ENCODE measurements at regions of chr12 and their contacts with region 1.

Region 1: DNA sequence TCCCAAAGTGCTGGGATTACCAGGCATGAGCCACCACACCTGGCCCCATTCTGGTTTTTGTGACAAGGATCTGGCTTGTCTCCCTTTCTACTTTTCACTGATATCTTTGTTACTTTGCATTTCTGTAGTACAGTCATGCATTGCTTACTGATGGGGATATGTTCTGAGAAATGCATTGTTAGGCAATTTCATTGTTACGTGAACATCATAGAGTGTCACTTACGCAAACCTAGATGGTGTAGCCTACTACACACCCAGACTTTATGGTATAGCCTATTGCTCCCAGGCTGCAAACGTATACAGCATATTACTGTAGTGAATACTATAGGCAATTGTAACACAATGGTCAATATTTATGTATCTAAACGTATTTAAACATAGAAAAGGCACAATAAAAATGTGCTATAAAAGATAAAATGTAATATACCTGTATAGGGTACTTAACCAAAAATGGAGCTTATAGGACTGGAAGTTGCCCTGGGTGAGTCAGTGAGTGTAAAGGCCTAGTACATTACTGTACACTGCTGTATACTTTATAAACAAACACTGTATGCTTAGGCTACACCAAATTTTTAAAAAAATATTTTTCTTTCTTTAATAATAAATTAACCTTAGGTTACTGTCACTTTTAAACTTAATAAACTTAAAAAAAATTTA is 16.0 kb downstream of the MRPL42 start:
- DNase-seq: no peak
- ATAC-seq: no peak
- H3K4me3 ChIP-seq: no peak overlapping the region
- H3K27ac ChIP-seq: no peak overlapping the region
- H3K4me1 ChIP-seq: no peaks in the 10 kb centered on the region
- H3K27me3 ChIP-seq: no peaks in the 10 kb centered on the region
- CTCF ChIP-seq: no peak

Region 2: GRCh38 chr12:92854344-92854743 is 628.9 kb before region 1 on chr12:
- CTCF ChIA-PET with region 1: no interaction called
- POLR2A ChIA-PET with region 1: interaction called, 13 read pairs
- intact Hi-C with region 1: no loop called
- DNase-seq: no peak
- ATAC-seq: no peak
- H3K4me3 ChIP-seq: no peak overlapping the region
- H3K27ac ChIP-seq: no peak overlapping the region
- H3K4me1 ChIP-seq: no peaks in the 10 kb centered on the region
- H3K27me3 ChIP-seq: no peaks in the 10 kb centered on the region
- CTCF ChIP-seq: no peak

Region 3: GRCh38 chr12:93603762-93604161 is 120.5 kb after region 1 on chr12:
- CTCF ChIA-PET with region 1: no interaction called
- POLR2A ChIA-PET with region 1: no interaction called
- intact Hi-C with region 1: no loop called
- DNase-seq: no peak
- ATAC-seq: no peak
- H3K4me3 ChIP-seq: no peak overlapping the region
- H3K27ac ChIP-seq: no peak overlapping the region
- H3K4me1 ChIP-seq: no peaks in the 10 kb centered on the region
- H3K27me3 ChIP-seq: no peaks in the 10 kb centered on the region
- CTCF ChIP-seq: no peak

Measured in PC-3 (cell line).